GM18951 (cell line): ENCODE measurements at regions of chr18 and their contacts with region 1.

Region 1: GRCh38 chr18:3151399-3152264 is 68.1 kb downstream of the MYOM1 start:
- POLR2A ChIP-seq: no peak

Region 2: DNA sequence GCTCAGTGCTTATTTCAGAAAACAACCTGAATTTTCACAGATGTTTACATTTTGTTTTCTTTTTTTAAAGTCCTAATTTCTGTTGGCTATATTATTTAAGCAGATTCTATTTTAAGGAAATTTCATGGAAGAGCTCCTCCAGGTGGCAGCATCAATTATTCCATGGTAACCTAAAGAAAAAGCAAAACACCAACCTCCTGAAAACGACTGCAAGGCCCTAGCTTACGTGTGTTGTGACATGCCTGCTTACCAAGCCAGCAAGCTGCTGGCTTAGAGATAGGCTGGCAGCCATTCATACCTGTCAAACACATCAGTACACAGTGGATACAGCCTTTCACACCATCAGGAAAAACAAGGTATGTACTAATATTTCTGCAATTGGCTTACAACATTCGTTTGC is 203.6 kb before region 1 on chr18:
- in situ Hi-C with region 1: loop called (anchors 10 kb)
- POLR2A ChIP-seq: no peak